RWPE1 (cell line): ENCODE measurements at regions of chr14 and their contacts with region 1.

Region 1: DNA sequence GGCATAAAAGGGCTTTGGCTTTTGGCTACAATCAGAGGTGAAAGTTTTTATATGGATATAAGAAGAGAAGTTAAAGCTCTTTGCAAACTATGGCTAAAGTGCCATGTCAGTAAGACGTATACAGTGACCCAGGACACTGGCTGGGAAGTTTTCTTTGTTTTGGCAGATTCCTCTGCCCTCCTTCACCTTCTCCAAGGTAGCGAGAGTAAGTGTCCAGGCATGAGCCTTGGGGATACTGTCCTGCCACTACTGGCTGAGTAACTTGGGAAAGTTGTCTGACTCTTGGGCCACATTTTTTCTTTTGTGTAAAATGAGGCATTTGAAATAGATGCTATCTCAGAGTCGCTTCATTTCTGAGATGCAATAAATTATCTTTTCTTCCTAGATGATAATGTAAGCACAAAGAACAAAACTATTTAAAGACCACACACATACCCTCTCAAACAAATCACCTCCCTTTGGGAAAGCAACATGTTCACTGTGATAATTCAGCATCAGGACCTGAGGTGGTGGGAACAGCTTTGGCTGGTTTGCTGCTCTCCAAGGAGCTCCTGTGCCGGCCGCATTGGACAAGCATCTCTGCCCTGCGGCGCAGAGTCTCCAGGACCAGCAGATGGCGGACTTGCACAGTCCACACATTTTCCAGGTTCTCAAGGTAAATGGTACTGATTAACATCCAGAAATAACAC is 106.3 kb downstream of the PTCSC3 start:
- DNase-seq: peak; percentile 57
- H3K27ac ChIP-seq: no peak overlapping the region
- CTCF ChIP-seq: peak; percentile 89

Region 2: DNA sequence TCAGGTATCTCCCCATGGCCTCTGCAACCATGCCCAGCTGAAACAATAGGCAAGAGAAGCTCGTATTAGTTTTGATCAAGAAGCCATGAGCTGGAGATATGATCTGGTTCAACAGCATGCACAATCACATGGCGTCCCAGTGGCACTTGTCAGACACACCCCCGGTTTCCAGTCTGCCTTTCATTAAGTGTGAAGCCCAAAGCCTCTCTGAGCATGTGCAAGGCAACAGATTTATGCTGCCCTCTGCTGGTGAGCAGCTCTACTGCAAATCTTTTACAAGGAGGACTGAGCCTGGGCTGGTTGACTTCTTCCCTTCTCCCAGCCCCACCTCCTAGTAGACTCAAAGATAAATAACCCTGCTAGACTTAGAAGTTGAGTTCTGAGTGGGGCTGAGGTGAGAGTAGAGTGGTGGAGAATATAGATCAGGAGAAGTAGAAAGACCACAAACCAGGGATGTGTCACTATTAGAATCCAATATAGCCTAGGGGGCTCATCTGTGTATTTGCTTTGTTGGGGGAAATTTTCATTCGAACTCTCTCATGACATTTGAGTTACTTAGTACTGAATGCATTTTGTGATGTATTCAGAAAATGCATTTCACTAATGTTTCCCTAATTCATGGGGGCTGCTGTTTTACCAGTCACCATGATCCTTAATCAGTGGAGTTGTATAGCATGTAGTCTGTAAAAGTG is 304.0 kb after region 1 on chr14:
- CTCF ChIA-PET with region 1: interaction called, 44 read pairs
- POLR2A ChIA-PET with region 1: no interaction called
- DNase-seq: peak; percentile 66
- H3K27ac ChIP-seq: no peak overlapping the region
- CTCF ChIP-seq: peak; percentile 86